Calu3 (cell line): ENCODE measurements at regions of chr14 and their contacts with region 1.

Region 1: DNA sequence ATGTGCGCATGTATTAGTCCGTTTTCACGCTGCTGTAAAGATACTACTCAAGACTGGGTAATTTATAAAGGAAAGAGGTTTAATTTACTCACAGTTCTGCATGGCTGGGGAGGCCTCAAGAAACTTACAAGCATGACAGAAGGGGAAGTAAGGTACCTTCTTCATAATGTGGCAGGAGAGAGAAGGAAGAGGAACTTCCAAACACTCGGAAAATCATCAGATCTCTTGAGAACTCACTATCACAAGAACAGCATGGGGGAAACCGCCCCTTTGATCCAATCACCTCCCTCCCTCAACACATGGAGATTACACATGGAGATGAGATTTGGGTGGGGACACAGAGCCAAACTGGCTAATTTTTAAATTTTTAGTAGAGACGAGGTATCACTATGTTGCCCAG is 41.8 kb upstream of the SNX6 start:
- DNase-seq: no peak
- H3K4me3 Mint-ChIP-seq: no peak overlapping the region
- H3K27ac Mint-ChIP-seq: no peak overlapping the region
- H3K4me1 Mint-ChIP-seq: no peaks in the 10 kb centered on the region
- H3K27me3 Mint-ChIP-seq: no peaks in the 10 kb centered on the region
- CTCF ChIP-seq: no peak

Region 2: GRCh38 chr14:34766060-34766459 is 94.3 kb after region 1 on chr14:
- CTCF ChIA-PET with region 1: interaction called, 3 read pairs
- intact Hi-C with region 1: loop called (anchors 5 kb)
- DNase-seq: no peak
- H3K4me3 Mint-ChIP-seq: no peak overlapping the region
- H3K27ac Mint-ChIP-seq: no peak overlapping the region
- H3K4me1 Mint-ChIP-seq: no peaks in the 10 kb centered on the region
- H3K27me3 Mint-ChIP-seq: no peaks in the 10 kb centered on the region
- CTCF ChIP-seq: no peak

Region 3: DNA sequence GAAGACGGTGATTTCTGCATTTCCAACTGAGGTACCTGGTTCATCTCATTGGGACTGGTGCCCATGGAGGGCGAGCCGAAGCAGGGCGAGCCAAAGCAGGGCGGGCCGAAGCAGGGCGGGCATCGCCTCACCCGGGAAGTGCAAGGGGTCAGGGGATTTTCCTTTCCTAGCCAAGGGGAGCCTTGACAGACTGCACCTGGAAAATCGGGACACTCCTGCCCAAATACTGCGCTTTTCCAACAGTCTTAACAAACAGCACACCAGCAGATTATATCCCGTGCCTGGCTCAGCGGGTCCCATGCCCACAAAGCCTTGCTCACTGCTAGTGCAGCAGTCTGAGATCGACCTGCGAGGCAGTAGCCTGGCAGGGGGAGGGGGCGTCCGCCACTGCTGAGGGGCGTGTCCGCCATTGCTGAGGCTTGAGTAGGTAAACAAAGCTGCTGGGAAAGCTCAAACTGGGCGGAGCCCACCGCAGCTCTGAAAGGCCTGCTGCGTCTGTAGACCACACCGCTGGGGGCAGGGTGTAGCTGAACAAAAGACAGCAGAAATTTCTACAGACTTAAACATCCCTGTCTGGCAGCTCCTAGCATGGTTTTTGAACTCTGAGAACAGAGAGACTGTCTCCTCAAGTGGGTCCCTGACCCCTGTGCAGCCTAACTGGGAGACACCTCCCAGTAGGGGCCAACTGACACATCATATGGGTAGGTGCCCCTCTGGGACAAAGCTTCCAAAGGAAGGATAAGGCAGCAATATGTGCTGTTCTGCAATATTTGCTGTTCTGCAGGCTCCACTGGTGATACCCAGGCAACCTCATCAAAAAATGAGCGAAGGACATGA is 126.2 kb after region 1 on chr14:
- CTCF ChIA-PET with region 1: no interaction called
- intact Hi-C with region 1: no loop called
- DNase-seq: no peak
- H3K4me3 Mint-ChIP-seq: no peak overlapping the region
- H3K27ac Mint-ChIP-seq: no peak overlapping the region
- H3K4me1 Mint-ChIP-seq: no peaks in the 10 kb centered on the region
- H3K27me3 Mint-ChIP-seq: no peaks in the 10 kb centered on the region
- CTCF ChIP-seq: no peak